Dorsolateral prefrontal cortex (tissue), 120 donors: ENCODE measurements at regions of chr11 and their contacts with region 1.

Region 1: DNA sequence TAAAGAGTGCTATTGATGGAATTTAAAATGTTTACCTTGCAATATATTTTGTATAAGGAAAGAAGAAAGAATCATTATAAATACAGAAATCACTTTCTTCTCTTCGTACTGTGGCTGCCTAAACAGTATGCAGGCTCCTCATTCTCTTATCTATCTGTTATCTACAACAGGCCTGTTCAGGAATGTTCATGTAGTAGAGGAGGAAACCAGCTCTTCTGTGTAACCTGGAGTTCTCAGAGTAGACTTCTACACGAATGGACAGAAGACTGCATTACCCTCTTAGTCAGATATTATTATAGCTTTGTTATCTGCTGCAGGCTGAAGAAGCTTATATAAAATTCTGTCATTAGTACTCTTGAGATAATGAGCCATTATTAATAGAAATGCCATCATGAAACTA is 1225.9 kb upstream of the CNTN5 start:
- DNase-seq: no peak
- H3K4me3 ChIP-seq: no peak overlapping the region
- H3K27ac ChIP-seq: no peak overlapping the region
- H3K27me3 ChIP-seq: no peaks in the 10 kb centered on the region
- CTCF ChIP-seq: no peak

Region 2: GRCh38 chr11:97856666-97857065 is 61.8 kb after region 1 on chr11:
- intact Hi-C with region 1: loop called in 1 of 2 experiments (anchors 10 kb)
- DNase-seq: no peak
- H3K4me3 ChIP-seq: no peak overlapping the region
- H3K27ac ChIP-seq: no peak overlapping the region
- H3K27me3 ChIP-seq: no peaks in the 10 kb centered on the region
- CTCF ChIP-seq: no peak